Breast epithelium (tissue), 4 donors: ENCODE measurements at regions of chr11 and their contacts with region 1.

Region 1: GRCh38 chr11:121520243-121521144 is 67.7 kb upstream of the SORL1-AS1 start:
- DNase-seq: no peak
- H3K4me3 ChIP-seq: no peak overlapping the region
- H3K27ac ChIP-seq: no peak overlapping the region
- H3K4me1 ChIP-seq: no peaks in the 10 kb centered on the region
- H3K27me3 ChIP-seq: no peaks in the 10 kb centered on the region
- CTCF ChIP-seq: no peak
- POLR2A ChIP-seq: no peak

Region 2: DNA sequence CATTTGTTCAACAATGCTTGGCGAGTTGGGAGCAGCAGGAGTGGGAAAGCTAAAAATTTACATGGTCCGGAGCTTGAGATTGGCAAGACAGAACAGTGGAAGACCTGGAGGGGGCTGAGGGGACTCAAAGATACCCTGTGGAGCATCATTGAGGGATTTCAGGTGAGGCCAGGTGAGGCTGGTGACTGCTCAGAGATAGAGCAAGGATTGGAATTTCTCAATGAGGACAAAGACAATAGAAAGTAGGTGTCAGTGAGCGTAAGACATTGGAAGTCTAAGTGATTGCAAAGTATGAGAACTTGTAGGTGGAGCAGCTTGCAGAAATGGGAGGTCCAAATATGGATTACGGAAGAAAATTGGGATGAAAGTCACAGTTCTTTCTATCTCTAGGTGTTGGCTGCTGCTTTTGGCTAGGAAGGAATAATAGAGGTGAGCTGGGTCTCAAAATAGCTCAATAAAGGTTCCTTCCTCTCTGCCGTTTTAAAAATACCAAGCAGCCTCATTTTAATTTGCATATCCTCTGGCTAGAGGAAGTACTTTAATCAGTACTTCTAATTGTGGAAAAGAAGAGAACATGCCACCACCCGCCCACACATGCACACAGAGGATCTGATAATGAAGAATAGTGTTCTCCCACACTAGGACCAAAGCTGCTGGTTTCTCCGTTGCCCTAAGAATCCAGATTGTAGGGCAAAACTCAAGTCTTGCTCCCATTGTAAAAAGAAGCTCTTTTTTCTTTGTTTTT is 26.0 kb before region 1 on chr11:
- intact Hi-C with region 1: loop called (anchors 2 kb)
- DNase-seq: no peak
- H3K4me3 ChIP-seq: no peak overlapping the region
- H3K27ac ChIP-seq: no peak overlapping the region
- H3K4me1 ChIP-seq: no peaks in the 10 kb centered on the region
- H3K27me3 ChIP-seq: no peaks in the 10 kb centered on the region
- CTCF ChIP-seq: no peak
- POLR2A ChIP-seq: no peak